ENCODE measurements at regions of chr15 and their contacts with region 1.

Region 1: GRCh38 chr15:88131935-88132334 is 124.6 kb downstream of the NTRK3 start:
- DNase-seq: no peak
- H3K4me3 ChIP-seq: no peak overlapping the region
- H3K27ac ChIP-seq: no peak overlapping the region
- H3K4me1 ChIP-seq: no peaks in the 10 kb centered on the region
- H3K27me3 ChIP-seq: no peaks in the 10 kb centered on the region
- CTCF ChIP-seq: no peak
- EP300 ChIP-seq: no peak
- POLR2A ChIP-seq: no peak

Region 2: DNA sequence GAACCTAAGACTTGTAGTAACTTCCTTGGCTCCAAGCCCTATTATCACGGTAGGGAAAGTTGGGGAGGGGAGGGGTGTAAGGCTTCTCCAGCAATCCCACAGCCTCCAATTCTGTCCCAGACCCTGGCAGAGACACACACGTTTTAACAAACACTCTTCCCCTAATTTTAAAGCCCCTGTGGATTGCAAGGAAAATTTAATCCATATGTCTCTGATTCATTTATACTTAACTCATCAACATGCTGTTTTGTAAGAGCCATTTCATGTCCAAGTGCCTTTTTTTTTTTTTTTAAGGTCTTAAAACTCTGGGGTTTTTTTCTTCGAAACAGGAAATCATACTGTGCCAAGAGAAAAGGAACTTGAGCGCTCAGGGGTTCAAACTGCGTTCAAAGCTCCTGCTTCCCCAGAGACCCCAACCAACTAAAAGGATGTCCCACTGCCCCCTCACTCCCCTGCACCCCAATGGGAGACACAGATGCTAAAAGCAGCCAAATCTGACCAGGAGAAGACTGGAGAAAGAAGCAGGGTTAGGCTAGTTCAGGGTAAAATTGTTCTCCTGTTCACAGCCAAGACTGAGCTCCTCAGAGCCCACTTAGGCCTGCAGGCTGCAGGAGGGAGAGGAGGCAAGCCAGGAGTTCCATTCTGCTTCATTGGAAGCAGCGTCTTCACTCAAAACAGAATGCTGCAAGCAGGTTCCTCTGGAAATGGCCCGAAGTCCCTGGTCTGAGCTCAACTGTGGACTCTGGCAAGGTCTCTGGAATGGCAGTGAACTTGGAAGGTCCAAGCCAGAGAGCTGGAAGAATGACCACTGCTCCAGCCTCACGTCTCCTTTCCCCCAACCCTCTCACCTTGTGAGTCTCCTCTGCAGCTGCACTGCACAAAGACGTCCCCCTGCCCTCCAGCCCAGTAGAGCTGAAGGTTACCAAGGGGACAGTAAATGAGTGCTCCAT is 47.8 kb before region 1 on chr15:
- intact Hi-C with region 1: loop called in 1 of 4 experiments (anchors 5 kb)
- DNase-seq: no peak
- H3K4me3 ChIP-seq: no peak overlapping the region
- H3K27ac ChIP-seq: no peak overlapping the region
- H3K4me1 ChIP-seq: no peaks in the 10 kb centered on the region
- H3K27me3 ChIP-seq: no peaks in the 10 kb centered on the region
- CTCF ChIP-seq: no peak
- EP300 ChIP-seq: no peak
- POLR2A ChIP-seq: no peak

Measured in ovary (tissue), 10 donors.